Breast epithelium (tissue), 4 donors: ENCODE measurements at regions of chr7 and their contacts with region 1.

Region 1: GRCh38 chr7:74401137-74401859 is 52.4 kb upstream of the GTF2IRD1 start:
- DNase-seq: peak; percentile 52 to 71
- H3K4me3 ChIP-seq: no peak overlapping the region
- H3K27ac ChIP-seq: no peak overlapping the region
- H3K4me1 ChIP-seq: no peaks in the 10 kb centered on the region
- H3K27me3 ChIP-seq: no peaks in the 10 kb centered on the region
- CTCF ChIP-seq: peak; percentile 90 to 94 (median 93)
- POLR2A ChIP-seq: no peak

Region 2: GRCh38 chr7:73758581-73759138 is 642.6 kb before region 1 on chr7:
- intact Hi-C with region 1: loop called (anchors 5 kb)
- DNase-seq: peak in 1 of 2 donors; percentile 53
- H3K4me3 ChIP-seq: no peak overlapping the region
- H3K27ac ChIP-seq: peak overlapping the region; percentile 59 to 69
- H3K4me1 ChIP-seq: no peaks in the 10 kb centered on the region
- H3K27me3 ChIP-seq: no peaks in the 10 kb centered on the region
- CTCF ChIP-seq: no peak
- POLR2A ChIP-seq: no peak

Region 3: DNA sequence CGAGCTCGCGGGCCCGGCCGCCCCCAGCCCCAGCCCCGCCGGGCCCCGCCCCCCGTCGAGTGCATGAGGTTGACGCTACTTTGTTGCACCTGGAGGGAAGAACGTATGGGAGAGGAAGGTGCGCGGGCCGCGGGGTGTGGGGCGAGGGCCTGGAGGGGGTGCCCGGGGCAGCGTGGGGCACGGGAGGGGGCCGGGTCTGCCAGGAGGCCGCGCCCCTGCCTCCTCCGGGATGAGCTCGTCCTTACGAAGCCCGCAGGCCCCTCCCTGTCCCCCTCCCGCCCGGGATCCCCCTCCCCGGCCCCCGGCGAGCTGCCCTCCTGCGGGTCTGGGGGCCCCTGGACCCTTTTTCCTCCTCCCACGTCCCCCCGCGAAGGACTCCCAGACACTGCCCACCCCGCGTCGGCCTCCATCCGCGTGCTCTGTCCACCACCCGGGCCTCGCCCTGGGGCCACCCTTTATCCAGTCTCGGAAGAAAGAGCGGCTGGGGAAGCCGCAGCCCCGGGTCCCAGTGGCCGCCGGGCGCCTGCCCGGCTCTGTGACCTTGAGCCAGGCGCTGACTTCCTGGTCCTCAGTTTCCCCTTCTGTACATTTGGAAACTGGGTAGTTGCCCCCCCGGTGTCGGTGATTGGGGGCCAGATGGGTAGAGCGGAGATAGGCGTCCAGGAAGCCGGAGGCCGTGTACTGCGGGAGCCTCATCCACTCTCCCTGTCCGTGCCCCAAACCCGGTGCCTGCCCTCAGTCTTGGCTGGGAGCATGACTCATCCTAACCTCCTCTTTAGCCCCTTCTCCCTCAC is 317.2 kb before region 1 on chr7:
- intact Hi-C with region 1: loop called (anchors 2 kb)
- DNase-seq: no peak
- H3K4me3 ChIP-seq: peak overlapping the region; percentile 74 to 84 (median 79)
- H3K27ac ChIP-seq: peak overlapping the region; percentile 71 to 84
- H3K4me1 ChIP-seq: peaks cover 7% of the 10 kb centered on the region in 2 donors
- H3K27me3 ChIP-seq: no peaks in the 10 kb centered on the region
- CTCF ChIP-seq: no peak
- POLR2A ChIP-seq: no peak

Region 4: DNA sequence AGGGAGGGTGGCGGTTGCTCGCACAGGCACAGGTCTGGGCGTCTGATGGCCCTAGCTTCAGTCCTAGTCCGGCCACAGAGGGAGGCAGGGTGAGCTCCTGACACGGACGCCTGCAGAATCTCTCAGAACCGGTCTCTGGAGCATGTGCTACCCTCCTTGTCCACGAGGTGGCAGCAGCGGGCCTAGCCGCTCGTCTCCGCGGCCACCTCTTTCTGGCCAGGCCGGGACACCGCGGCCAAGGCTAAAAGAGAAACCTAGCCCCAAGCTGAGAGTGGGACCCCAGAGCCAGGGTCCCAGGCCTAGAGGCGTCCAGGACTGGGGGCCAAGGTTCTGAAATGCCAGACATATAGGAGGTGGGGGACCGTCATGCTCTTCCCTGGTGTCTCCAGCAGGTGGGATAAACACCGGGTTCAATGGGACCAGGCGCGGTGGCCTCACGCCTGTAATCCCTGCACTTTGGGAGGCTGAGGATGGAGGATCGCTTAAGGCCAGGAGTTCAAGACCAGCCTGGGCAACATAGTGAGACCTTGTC is 194.6 kb before region 1 on chr7:
- intact Hi-C with region 1: loop called (anchors 10 kb)
- DNase-seq: peak; percentile 66 to 91
- H3K4me3 ChIP-seq: peak overlapping the region; percentile 20 to 62 (median 39)
- H3K27ac ChIP-seq: no peak overlapping the region
- H3K4me1 ChIP-seq: no peaks in the 10 kb centered on the region
- H3K27me3 ChIP-seq: no peaks in the 10 kb centered on the region
- CTCF ChIP-seq: peak; percentile 85 to 96 (median 95)
- POLR2A ChIP-seq: no peak